OCI-LY7 (cell line): ENCODE measurements at regions of chr4 and their contacts with region 1.

Region 1: GRCh38 chr4:158624889-158625478 is 46.7 kb downstream of the C4orf46 start:
- DNase-seq: peak; percentile 60
- H3K4me3 ChIP-seq: no peak overlapping the region
- H3K27ac ChIP-seq: no peak overlapping the region
- H3K4me1 ChIP-seq: no peaks in the 10 kb centered on the region
- CTCF ChIP-seq: peak; percentile 87

Region 2: DNA sequence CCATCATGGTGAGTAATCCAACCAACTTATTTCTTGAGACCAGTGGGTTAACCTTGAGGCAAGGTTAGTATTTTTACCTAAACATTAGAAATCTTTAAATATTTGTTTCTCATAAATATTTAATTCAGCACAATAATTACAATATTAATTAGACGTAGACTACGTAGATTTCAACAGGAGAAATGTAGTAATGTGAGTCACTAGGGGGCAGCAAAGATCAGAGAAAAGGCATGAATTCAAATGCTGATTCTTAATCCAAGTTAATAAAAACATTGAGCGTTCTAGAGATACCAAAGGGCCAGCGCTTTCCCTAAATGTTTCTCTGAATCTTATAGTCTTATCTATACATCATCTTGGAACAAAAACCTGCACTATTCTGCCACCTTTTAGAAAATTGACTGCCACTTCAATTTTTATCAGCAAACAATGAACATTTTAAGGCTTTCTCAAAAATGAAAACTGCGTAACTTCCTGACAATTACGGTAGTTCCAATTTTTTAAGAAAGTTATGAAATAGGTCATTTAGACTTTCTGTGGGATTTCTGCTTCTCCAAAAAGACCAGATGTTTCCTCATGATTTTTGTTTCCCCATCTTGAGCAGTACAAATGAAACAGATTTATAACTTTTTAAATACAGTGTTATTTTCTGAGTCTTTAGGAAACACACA is 632.8 kb before region 1 on chr4:
- CTCF ChIA-PET with region 1: no interaction called
- POLR2A ChIA-PET with region 1: no interaction called
- intact Hi-C with region 1: loop called (anchors 10 kb)
- DNase-seq: peak; percentile 38
- H3K4me3 ChIP-seq: no peak overlapping the region
- H3K27ac ChIP-seq: no peak overlapping the region
- H3K4me1 ChIP-seq: no peaks in the 10 kb centered on the region
- CTCF ChIP-seq: peak; percentile 85

Region 3: DNA sequence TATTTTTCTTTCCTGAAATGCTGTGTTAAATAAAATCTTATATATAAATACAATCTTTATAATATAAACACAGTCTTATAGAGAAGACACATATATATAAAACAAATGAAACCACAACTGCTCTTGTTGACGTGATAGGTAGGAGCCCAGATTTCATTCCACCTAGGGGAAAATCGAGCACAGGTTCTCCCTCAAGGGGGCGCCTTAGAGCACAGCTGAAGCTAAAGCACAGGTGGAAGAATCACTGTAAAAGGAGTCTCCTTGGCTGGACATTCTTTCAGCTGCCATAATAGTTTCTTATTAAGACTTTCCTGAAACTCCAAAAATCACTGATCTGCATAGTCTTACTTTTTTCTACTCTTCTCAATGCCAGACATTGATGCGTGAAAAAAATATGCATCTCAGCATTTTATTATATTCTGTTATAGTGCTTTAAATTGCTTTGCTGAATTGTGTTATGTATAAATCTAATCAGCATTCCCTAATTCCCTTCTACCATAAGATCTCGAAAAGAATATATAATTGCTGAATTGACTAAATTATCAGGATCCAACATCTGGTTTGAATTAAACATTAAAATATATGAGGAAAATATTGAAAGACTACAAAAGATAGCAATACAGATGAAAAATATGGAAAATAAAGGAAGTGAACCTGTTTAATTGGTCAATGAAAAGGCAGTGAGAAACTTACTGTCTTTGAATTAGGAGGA is 128.8 kb before region 1 on chr4:
- CTCF ChIA-PET with region 1: no interaction called
- POLR2A ChIA-PET with region 1: no interaction called
- intact Hi-C with region 1: loop called (anchors 10 kb)
- DNase-seq: peak; percentile 14
- H3K4me3 ChIP-seq: no peak overlapping the region
- H3K27ac ChIP-seq: no peak overlapping the region
- H3K4me1 ChIP-seq: no peaks in the 10 kb centered on the region
- CTCF ChIP-seq: peak; percentile 67